Heart left ventricle (tissue), 16 donors: ENCODE measurements at regions of chr16 and their contacts with region 1.

Region 1: GRCh38 chr16:86929057-86929871 is 350.9 kb downstream of the FOXL1 start:
- DNase-seq: peak; percentile 50 to 82 (median 71)
- ATAC-seq: peak in 3 of 4 donors; percentile 58 to 79 (median 62)
- H3K4me3 ChIP-seq: peak overlapping the region in 3 of 12 donors; percentile 1 to 11 (median 11)
- H3K27ac ChIP-seq: peak overlapping the region in 5 of 12 donors; percentile 16 to 64 (median 46)
- H3K4me1 ChIP-seq: peaks cover 0 to 38% (median 28%) of the 10 kb centered on the region in 12 donors
- H3K27me3 ChIP-seq: peaks cover 0 to 27% (median 0%) of the 10 kb centered on the region in 9 donors
- CTCF ChIP-seq: no peak
- POLR2A ChIP-seq: no peak

Region 2: DNA sequence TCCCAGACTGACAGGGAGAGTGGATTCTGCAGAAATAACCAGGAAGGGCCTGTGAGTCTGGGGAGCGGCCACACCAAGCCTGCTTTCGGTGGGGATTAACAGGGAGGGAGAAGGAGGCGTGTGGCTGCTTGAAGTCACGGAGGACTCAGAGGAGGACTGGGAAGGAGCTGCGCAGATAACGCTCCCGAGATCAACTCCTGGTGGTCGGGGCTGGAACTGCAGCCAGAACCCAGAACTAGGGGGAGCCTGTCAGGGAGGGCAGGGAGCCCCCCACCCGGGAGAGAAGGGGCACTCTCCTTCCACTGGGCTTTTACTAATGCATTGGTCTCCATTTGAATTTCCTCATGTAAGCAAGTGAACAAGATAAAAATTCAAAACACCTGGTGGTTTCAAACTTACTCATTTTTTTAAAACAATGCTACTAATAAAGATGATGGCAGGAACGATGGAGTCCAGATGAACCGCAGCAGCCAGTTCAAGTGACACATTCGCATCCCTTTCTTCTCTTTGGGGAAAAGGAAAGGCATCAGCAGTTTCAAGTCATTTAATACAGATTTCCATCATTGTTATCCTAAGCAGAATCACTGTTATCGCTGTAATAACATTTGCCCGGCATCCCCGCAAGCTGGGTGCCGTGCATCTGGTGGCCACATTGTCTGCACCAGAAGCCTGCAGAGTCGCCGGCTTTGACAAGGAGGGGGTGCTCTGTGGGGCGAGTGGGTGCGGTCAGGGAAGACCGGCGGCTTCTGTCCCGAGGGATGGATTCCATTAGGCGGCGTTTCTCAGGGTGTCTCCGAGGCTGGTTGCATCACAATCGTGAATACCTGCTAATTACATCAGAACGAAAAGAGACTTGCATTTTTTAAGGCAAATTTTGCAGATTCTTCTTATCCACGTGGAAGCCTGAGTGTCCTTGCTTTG is 167.9 kb before region 1 on chr16:
- intact Hi-C with region 1: loop called in 1 of 10 experiments (anchors 10 kb)
- DNase-seq: peak; percentile 53 to 80 (median 64)
- ATAC-seq: peak; percentile 50 to 87 (median 79)
- H3K4me3 ChIP-seq: peak overlapping the region in 6 of 12 donors; percentile 5 to 42 (median 30)
- H3K27ac ChIP-seq: no peak overlapping the region
- H3K4me1 ChIP-seq: peaks cover 0 to 20% (median 4%) of the 10 kb centered on the region in 12 donors
- H3K27me3 ChIP-seq: peaks cover 0 to 65% (median 20%) of the 10 kb centered on the region in 9 donors
- CTCF ChIP-seq: peak; percentile 64 to 92 (median 76)
- POLR2A ChIP-seq: no peak